ENCODE measurements at regions of chr14 and their contacts with region 1.

Region 1: GRCh38 chr14:76947078-76947837 is 81.2 kb downstream of the IRF2BPL start:
- DNase-seq: peak; percentile 91 to 94 (median 93)
- ATAC-seq: peak; percentile 85 to 94 (median 94)
- H3K4me3 ChIP-seq: peak overlapping the region in 9 of 12 donors; percentile 0 to 29 (median 14)
- H3K27ac ChIP-seq: peak overlapping the region in 11 of 12 donors; percentile 77 to 89 (median 80)
- H3K4me1 ChIP-seq: peaks cover 5 to 50% (median 38%) of the 10 kb centered on the region in 12 donors
- H3K27me3 ChIP-seq: no peaks in the 10 kb centered on the region
- CTCF ChIP-seq: peak; percentile 32 to 78 (median 58)
- POLR2A ChIP-seq: no peak

Region 2: GRCh38 chr14:76729953-76730505 is 217.2 kb before region 1 on chr14:
- intact Hi-C with region 1: no loop called
- DNase-seq: no peak
- ATAC-seq: no peak
- H3K4me3 ChIP-seq: no peak overlapping the region
- H3K27ac ChIP-seq: peak overlapping the region in 4 of 12 donors; percentile 10 to 43 (median 38)
- H3K4me1 ChIP-seq: peaks cover 0 to 33% (median 12%) of the 10 kb centered on the region in 12 donors
- H3K27me3 ChIP-seq: no peaks in the 10 kb centered on the region
- CTCF ChIP-seq: no peak
- POLR2A ChIP-seq: no peak

Region 3: DNA sequence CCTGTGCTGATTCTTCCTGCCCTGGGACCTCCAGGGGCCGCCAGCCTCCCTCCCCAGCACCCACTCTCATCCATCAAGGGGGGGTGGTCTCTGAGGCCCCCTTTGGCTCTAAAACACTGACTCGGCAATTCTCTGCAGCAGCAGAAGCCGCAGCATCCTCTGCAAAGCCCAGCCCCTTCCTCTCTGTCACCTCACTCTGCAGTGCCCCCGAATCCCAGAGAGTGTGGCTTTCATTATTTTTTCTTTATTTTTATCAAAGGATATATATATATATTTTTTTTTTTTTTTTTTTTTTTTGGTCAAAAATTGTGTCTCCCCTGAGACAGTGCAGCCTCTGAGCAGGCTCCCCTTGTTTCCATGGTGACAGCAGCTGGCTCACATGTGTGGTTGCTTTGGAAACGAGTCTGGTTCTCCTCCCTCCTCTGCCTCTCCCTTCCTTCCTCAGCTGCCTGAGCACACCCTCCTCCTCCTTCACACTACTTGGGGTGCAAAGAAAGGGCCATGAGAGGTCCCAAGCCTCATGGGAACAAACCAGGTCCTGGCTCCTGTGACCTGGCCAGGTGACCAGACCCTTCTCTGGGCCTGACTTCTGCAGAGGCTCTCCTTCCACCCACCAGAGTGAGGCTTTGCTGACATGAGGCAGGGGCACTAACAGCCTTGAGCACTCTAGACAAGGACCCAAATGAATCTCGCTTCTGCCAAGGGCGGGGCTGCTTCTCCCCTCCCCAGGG is 20.6 kb before region 1 on chr14:
- intact Hi-C with region 1: no loop called
- DNase-seq: peak; percentile 73 to 81 (median 76)
- ATAC-seq: peak in 3 of 4 donors; percentile 72 to 84 (median 73)
- H3K4me3 ChIP-seq: no peak overlapping the region
- H3K27ac ChIP-seq: peak overlapping the region in 6 of 12 donors; percentile 7 to 40 (median 26)
- H3K4me1 ChIP-seq: peaks cover 0 to 67% (median 35%) of the 10 kb centered on the region in 12 donors
- H3K27me3 ChIP-seq: no peaks in the 10 kb centered on the region
- CTCF ChIP-seq: no peak
- POLR2A ChIP-seq: no peak

Region 4: GRCh38 chr14:77023001-77023996 is 76.0 kb after region 1 on chr14:
- intact Hi-C with region 1: loop called in 3 of 10 experiments (anchors 2 kb)
- DNase-seq: peak in 2 of 5 donors; percentile 46
- ATAC-seq: peak; percentile 35 to 64 (median 56)
- H3K4me3 ChIP-seq: peak overlapping the region in 10 of 12 donors; percentile 6 to 96 (median 82)
- H3K27ac ChIP-seq: peak overlapping the region; percentile 73 to 100 (median 99)
- H3K4me1 ChIP-seq: peaks cover 10 to 47% (median 36%) of the 10 kb centered on the region in 12 donors
- H3K27me3 ChIP-seq: no peaks in the 10 kb centered on the region
- CTCF ChIP-seq: peak in 3 of 12 donors; percentile 20 to 27 (median 23)
- POLR2A ChIP-seq: no peak

Region 5: DNA sequence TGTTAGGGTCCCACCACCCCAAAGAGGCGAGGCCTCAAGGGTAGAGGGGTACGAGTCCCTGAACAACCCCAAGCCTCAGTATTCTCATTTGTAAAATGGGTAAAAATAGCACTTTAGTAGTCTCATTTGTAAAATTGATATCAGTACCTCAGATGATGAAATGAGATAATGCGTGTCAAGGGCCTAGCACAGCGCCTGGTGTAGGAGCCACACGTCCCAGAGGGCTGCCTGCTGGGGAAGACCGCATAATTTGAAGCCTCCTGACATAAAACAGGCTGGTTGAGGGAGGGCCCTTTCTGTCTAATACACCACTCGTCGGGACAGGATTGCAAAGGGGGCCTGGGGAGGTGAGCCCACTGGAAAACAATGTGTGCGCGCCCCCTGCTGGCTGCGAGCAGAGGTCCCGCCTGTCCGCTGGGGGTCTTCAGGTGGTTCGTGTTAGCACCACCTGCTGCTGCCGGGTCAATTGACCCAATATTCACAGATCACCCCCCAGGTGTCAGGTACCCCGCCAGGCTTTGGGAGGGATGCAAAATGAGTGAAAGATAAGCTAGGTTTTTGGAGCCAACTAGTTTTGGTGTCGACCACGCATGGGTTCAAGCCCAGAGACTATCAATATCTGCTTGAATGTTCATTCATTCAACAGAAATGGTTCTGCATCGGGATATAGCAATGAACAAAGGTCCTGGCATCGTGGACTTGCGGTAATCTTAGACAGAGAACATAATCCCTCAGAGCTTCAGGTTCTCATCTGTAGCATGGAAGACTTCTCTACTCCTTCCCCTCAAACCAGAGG is 106.0 kb after region 1 on chr14:
- intact Hi-C with region 1: loop called in 4 of 10 experiments (anchors 1 to 10 kb)
- DNase-seq: peak; percentile 73 to 90 (median 86)
- ATAC-seq: peak; percentile 37 to 78 (median 70)
- H3K4me3 ChIP-seq: no peak overlapping the region
- H3K27ac ChIP-seq: peak overlapping the region in 10 of 12 donors; percentile 16 to 90 (median 75)
- H3K4me1 ChIP-seq: peaks cover 0 to 45% (median 18%) of the 10 kb centered on the region in 12 donors
- H3K27me3 ChIP-seq: no peaks in the 10 kb centered on the region
- CTCF ChIP-seq: peak; percentile 88 to 98 (median 92)
- POLR2A ChIP-seq: no peak

Region 6: GRCh38 chr14:77067632-77068514 is 120.6 kb after region 1 on chr14:
- intact Hi-C with region 1: no loop called
- DNase-seq: peak; percentile 66 to 85 (median 74)
- ATAC-seq: peak; percentile 60 to 84 (median 78)
- H3K4me3 ChIP-seq: no peak overlapping the region
- H3K27ac ChIP-seq: peak overlapping the region in 5 of 12 donors; percentile 8 to 72 (median 39)
- H3K4me1 ChIP-seq: peaks cover 3 to 49% (median 28%) of the 10 kb centered on the region in 12 donors
- H3K27me3 ChIP-seq: no peaks in the 10 kb centered on the region
- CTCF ChIP-seq: peak; percentile 72 to 95 (median 84)
- POLR2A ChIP-seq: no peak

Measured in heart left ventricle (tissue), 16 donors.